ENCODE measurements at regions of chr7 and their contacts with region 1.

Region 1: DNA sequence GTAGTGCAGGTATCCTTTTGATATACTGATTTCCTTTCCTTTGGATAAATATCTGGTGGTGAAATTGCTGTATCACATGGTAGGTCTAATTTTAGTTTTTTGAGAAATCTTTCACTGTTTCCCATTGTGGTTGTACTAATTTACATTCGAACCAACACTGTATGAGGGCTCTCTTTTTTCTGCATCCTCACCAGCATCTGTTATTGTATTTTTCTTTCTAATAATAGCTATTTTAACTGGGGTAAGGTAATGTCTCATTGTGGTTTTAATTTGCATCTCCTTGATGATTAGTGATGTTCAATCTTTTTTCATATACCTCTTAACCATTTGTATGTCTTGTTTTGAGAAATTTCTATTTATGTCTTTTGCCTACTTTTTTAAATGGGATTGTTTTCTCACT is 335.4 kb upstream of the MTPN start:
- DNase-seq: no peak
- H3K4me3 ChIP-seq: no peak overlapping the region
- H3K27ac ChIP-seq: peak overlapping the region; percentile 25
- H3K4me1 ChIP-seq: peaks cover 38% of the 10 kb centered on the region
- CTCF ChIP-seq: no peak

Region 2: GRCh38 chr7:136326045-136326609 is 13.5 kb after region 1 on chr7:
- CTCF ChIA-PET with region 1: no interaction called
- POLR2A ChIA-PET with region 1: interaction called, 11 read pairs
- intact Hi-C with region 1: no loop called
- DNase-seq: no peak
- H3K4me3 ChIP-seq: no peak overlapping the region
- H3K27ac ChIP-seq: no peak overlapping the region
- H3K4me1 ChIP-seq: no peaks in the 10 kb centered on the region
- CTCF ChIP-seq: no peak

Region 3: DNA sequence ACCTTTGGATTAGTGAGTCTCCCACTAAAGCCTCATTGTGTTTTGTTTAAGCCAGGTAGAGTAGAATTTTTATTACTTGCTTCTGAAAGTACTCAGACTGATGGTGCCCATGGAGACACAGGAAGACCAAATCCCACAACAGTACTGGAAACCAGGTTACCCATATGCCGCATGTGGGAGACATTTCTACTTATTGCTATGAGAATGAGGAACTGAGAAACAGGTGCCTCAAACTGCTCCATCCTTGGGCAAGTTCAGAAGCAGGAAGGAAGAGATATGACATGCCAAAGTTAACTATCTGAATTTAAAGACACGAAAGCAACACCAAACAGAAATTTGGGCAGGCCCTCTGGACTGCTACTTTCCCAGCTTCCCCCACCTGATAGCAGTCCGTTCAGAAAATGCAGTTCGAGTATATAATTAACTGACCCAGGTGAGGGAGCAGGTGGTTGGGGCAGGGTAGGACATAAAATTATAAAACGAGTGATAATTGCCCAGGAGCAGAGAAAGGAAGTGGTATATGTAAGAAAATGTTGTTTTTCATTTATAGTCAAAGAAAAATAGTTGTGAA is 46.8 kb after region 1 on chr7:
- CTCF ChIA-PET with region 1: no interaction called
- POLR2A ChIA-PET with region 1: no interaction called
- intact Hi-C with region 1: loop called (anchors 5 kb)
- DNase-seq: peak; percentile 95
- H3K4me3 ChIP-seq: peak overlapping the region; percentile 49
- H3K27ac ChIP-seq: peak overlapping the region; percentile 100
- H3K4me1 ChIP-seq: peaks cover 79% of the 10 kb centered on the region
- CTCF ChIP-seq: 0 out of 2 replicates have a peak, but pooled peaks have one; percentile 25

Region 4: DNA sequence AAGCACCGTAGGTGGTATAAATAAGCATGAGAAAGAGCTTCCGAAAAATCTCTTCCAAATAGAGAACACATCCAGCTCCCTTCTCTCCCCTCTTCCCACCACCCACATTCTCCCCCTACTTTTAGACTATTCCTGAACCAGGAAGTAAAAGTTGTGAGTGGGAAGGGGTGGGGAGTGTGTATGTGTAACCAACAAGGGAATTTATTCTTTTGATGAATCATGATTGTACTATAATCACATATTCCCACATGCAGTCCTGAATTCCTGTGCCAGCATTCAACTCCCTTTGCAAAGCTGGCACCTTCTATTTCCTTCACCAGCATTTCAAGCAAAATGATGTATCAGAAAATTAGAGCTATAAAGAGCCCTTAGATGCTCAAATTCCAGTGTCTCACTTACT is 325.2 kb after region 1 on chr7:
- CTCF ChIA-PET with region 1: no interaction called
- POLR2A ChIA-PET with region 1: no interaction called
- intact Hi-C with region 1: no loop called
- DNase-seq: no peak
- H3K4me3 ChIP-seq: no peak overlapping the region
- H3K27ac ChIP-seq: no peak overlapping the region
- H3K4me1 ChIP-seq: no peaks in the 10 kb centered on the region
- CTCF ChIP-seq: no peak

Region 5: GRCh38 chr7:136783934-136784333 is 471.3 kb after region 1 on chr7:
- CTCF ChIA-PET with region 1: no interaction called
- POLR2A ChIA-PET with region 1: no interaction called
- intact Hi-C with region 1: no loop called
- DNase-seq: no peak
- H3K4me3 ChIP-seq: no peak overlapping the region
- H3K27ac ChIP-seq: no peak overlapping the region
- H3K4me1 ChIP-seq: no peaks in the 10 kb centered on the region
- CTCF ChIP-seq: no peak

Measured in OCI-LY7 (cell line).